Endothelial cell of umbilical vein (primary cell): ENCODE measurements at regions of chr17 and their contacts with region 1.

Region 1: DNA sequence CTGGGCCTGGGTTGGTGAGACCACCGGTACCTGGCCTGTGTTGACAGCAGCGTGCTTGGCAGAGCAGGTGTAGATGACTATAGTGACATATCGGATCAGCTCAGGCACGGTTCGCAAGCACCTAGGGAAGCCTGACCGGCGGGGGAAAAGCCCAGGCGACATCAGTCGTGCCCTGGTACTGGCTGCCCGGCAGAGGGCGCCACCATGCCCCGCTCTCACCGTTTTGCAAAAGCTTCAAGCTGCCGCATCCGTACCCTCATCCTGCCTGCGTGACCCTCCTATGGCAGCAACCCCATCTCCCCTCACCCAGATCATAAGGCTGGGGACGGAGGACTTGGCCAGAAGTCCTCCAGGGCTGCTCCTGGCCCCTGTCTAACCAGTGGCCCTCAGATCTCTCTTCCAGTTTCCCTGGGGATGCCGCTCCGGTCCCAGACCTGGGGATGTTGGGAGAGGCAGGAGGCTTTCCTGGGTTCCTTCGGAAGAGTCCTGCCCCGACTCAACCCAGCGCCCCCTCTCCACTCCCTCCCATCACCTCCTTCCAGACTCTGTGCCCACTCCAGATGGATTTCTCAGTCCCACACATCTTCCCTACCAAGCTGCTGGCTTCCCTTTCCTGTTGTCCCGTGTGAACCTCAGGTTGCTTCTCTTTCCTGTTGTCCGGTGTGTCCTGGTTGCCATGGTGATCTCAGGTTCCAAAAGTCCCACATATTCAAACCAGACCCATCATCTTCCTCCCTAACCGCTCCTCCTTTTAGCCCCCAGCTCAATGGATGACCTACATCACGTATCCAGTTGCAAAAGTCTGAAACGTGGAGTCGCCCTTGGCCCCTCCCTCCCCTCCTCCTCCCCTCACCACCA is 13.7 kb downstream of the ALOX12B start:
- DNase-seq: peak; percentile 59
- H3K4me3 ChIP-seq: no peak overlapping the region
- H3K27ac ChIP-seq: no peak overlapping the region
- H3K4me1 ChIP-seq: no peaks in the 10 kb centered on the region
- H3K27me3 ChIP-seq: peaks cover 35 to 38% of the 10 kb centered on the region in 2 experiments
- CTCF ChIP-seq: peak; percentile 92 to 98
- POLR2A ChIP-seq: no peak

Region 2: GRCh38 chr17:7972131-7972785 is 101.6 kb before region 1 on chr17:
- CTCF ChIA-PET with region 1: no interaction called
- POLR2A ChIA-PET with region 1: no interaction called
- dilution Hi-C with region 1: no loop called
- intact Hi-C with region 1: no loop called
- DNase-seq: no peak
- H3K4me3 ChIP-seq: no peak overlapping the region
- H3K27ac ChIP-seq: no peak overlapping the region
- H3K4me1 ChIP-seq: no peaks in the 10 kb centered on the region
- H3K27me3 ChIP-seq: peaks cover 0 to 2% of the 10 kb centered on the region in 2 experiments
- CTCF ChIP-seq: peak in 1 of 2 donors; percentile 6
- POLR2A ChIP-seq: no peak

Region 3: GRCh38 chr17:8029135-8029534 is 44.7 kb before region 1 on chr17:
- CTCF ChIA-PET with region 1: no interaction called
- POLR2A ChIA-PET with region 1: no interaction called
- dilution Hi-C with region 1: no loop called
- intact Hi-C with region 1: no loop called
- DNase-seq: no peak
- H3K4me3 ChIP-seq: no peak overlapping the region
- H3K27ac ChIP-seq: no peak overlapping the region
- H3K4me1 ChIP-seq: no peaks in the 10 kb centered on the region
- H3K27me3 ChIP-seq: peaks cover 9 to 10% of the 10 kb centered on the region in 2 experiments
- CTCF ChIP-seq: no peak
- POLR2A ChIP-seq: no peak

Region 4: DNA sequence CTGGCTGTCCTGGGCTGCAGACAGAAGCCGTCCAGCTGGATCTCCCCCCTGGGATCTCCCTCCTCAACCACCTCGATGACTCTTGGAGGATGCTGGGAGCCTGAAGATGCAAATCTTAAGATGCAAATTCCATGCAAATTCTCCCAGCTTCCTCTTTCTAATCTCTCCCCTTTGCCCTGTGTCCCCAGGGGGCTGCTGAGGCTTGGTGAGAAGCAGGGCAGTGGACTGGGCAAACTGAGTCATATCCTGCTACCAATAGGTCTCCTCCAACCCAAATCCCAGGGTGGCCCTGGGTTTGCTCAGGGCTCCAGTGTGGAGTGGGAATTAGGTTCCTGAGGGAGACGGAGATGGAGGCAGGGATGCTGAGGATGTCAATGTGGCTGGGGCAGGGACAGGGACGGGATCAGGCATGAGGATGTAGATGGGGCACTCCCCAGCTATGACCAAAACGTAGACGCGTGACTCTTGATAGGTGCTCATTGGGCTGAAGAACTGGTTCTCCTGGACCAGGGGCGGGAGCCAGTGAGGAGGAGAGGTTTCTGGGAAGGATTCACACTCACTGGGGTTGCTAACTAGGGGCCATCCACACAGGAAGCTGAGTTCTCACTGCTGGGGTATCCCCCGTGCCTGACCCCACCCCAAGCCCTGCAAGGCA is 17.3 kb after region 1 on chr17:
- CTCF ChIA-PET with region 1: interaction called, 37 read pairs
- POLR2A ChIA-PET with region 1: no interaction called
- dilution Hi-C with region 1: no loop called
- intact Hi-C with region 1: no loop called
- DNase-seq: no peak
- H3K4me3 ChIP-seq: no peak overlapping the region
- H3K27ac ChIP-seq: no peak overlapping the region
- H3K4me1 ChIP-seq: no peaks in the 10 kb centered on the region
- H3K27me3 ChIP-seq: peaks cover 2 to 12% of the 10 kb centered on the region in 2 experiments
- CTCF ChIP-seq: no peak
- POLR2A ChIP-seq: no peak

Region 5: GRCh38 chr17:8103549-8103948 is 29.7 kb after region 1 on chr17:
- CTCF ChIA-PET with region 1: interaction called, 22 read pairs
- POLR2A ChIA-PET with region 1: no interaction called
- dilution Hi-C with region 1: no loop called
- intact Hi-C with region 1: no loop called
- DNase-seq: no peak
- H3K4me3 ChIP-seq: no peak overlapping the region
- H3K27ac ChIP-seq: no peak overlapping the region
- H3K4me1 ChIP-seq: no peaks in the 10 kb centered on the region
- H3K27me3 ChIP-seq: peaks cover 0 to 6% of the 10 kb centered on the region in 2 experiments
- CTCF ChIP-seq: no peak
- POLR2A ChIP-seq: no peak

Region 6: GRCh38 chr17:8109661-8110464 is 36.0 kb after region 1 on chr17:
- CTCF ChIA-PET with region 1: interaction called, 51 read pairs
- POLR2A ChIA-PET with region 1: no interaction called
- dilution Hi-C with region 1: no loop called
- intact Hi-C with region 1: no loop called
- DNase-seq: peak; percentile 28
- H3K4me3 ChIP-seq: no peak overlapping the region
- H3K27ac ChIP-seq: no peak overlapping the region
- H3K4me1 ChIP-seq: no peaks in the 10 kb centered on the region
- H3K27me3 ChIP-seq: peaks cover 13 to 21% of the 10 kb centered on the region in 2 experiments
- CTCF ChIP-seq: peak; percentile 92 to 93
- POLR2A ChIP-seq: no peak